ENCODE measurements at regions of chr9 and their contacts with region 1.

Region 1: GRCh38 chr9:131178382-131178781 is 53.0 kb downstream of the NUP214 start:
- DNase-seq: peak; percentile 86
- ATAC-seq: peak; percentile 99
- H3K4me3 Mint-ChIP-seq: no peak overlapping the region
- H3K27ac Mint-ChIP-seq: peak overlapping the region; percentile 48
- H3K4me1 Mint-ChIP-seq: peaks cover 11% of the 10 kb centered on the region
- H3K27me3 Mint-ChIP-seq: no peaks in the 10 kb centered on the region

Region 2: GRCh38 chr9:131068076-131068816 is 110.1 kb before region 1 on chr9:
- CTCF ChIA-PET with region 1: no interaction called
- POLR2A ChIA-PET with region 1: no interaction called
- DNase-seq: no peak
- ATAC-seq: no peak
- H3K4me3 Mint-ChIP-seq: no peak overlapping the region
- H3K27ac Mint-ChIP-seq: no peak overlapping the region
- H3K4me1 Mint-ChIP-seq: no peaks in the 10 kb centered on the region
- H3K27me3 Mint-ChIP-seq: no peaks in the 10 kb centered on the region

Region 3: GRCh38 chr9:131167146-131167692 is 11.2 kb before region 1 on chr9:
- CTCF ChIA-PET with region 1: interaction called, 20 read pairs
- POLR2A ChIA-PET with region 1: interaction called, 6 read pairs
- DNase-seq: no peak
- ATAC-seq: no peak
- H3K4me3 Mint-ChIP-seq: no peak overlapping the region
- H3K27ac Mint-ChIP-seq: no peak overlapping the region
- H3K4me1 Mint-ChIP-seq: peaks cover 6% of the 10 kb centered on the region
- H3K27me3 Mint-ChIP-seq: no peaks in the 10 kb centered on the region

Region 4: DNA sequence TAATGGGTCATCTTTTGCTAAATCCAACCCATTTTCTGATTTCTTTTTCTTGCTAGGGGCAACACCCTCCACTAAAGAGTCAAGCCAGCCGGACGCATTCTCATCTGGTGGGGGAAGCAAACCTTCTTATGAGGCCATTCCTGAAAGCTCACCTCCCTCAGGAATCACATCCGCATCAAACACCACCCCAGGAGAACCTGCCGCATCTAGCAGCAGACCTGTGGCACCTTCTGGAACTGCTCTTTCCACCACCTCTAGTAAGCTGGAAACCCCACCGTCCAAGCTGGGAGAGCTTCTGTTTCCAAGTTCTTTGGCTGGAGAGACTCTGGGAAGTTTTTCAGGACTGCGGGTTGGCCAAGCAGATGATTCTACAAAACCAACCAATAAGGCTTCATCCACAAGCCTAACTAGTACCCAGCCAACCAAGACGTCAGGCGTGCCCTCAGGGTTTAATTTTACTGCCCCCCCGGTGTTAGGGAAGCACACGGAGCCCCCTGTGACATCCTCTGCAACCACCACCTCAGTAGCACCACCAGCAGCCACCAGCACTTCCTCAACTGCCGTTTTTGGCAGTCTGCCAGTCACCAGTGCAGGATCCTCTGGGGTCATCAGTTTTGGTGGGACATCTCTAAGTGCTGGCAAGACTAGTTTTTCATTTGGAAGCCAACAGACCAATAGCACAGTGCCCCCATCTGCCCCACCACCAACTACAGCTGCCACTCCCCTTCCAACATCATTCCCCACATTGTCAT is 19.0 kb after region 1 on chr9:
- CTCF ChIA-PET with region 1: interaction called, 16 read pairs
- POLR2A ChIA-PET with region 1: no interaction called
- DNase-seq: no peak
- ATAC-seq: no peak
- H3K4me3 Mint-ChIP-seq: no peak overlapping the region
- H3K27ac Mint-ChIP-seq: peak overlapping the region; percentile 51
- H3K4me1 Mint-ChIP-seq: peaks cover 16% of the 10 kb centered on the region
- H3K27me3 Mint-ChIP-seq: no peaks in the 10 kb centered on the region

Region 5: GRCh38 chr9:131203431-131204218 is 25.2 kb after region 1 on chr9:
- CTCF ChIA-PET with region 1: interaction called, 16 read pairs
- POLR2A ChIA-PET with region 1: no interaction called
- DNase-seq: no peak
- ATAC-seq: peak; percentile 44
- H3K4me3 Mint-ChIP-seq: no peak overlapping the region
- H3K27ac Mint-ChIP-seq: no peak overlapping the region
- H3K4me1 Mint-ChIP-seq: no peaks in the 10 kb centered on the region
- H3K27me3 Mint-ChIP-seq: no peaks in the 10 kb centered on the region

Region 6: DNA sequence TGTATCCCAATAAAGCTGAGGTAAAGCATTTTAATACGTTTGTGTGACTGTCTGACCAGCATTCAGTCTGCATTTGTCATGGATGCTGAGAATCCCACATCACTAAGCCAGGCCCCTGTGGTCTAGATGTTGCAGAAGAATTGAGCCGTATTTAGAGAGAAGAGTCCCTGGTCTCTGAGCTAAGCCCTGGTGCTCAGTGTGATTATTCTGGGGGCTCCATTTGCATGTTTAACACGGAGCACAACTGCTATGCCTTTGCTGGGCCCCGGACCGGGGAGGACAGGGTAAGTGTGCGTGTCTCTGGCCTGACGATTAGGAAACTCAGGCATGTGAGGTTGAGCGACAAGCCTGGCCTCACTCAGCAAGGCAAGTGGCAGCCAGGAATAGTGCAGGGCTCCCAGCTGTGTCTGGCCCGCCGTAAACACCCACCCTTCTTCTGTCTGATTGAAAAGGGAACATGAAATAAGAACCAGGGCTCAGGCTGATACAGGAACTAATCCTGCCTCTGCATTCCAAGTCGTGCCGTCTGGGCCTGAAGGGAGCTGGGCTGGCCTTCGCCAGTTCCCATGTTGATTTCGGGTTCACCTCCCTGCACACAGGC is 75.6 kb after region 1 on chr9:
- CTCF ChIA-PET with region 1: interaction called, 17 read pairs
- POLR2A ChIA-PET with region 1: interaction called, 3 read pairs
- DNase-seq: no peak
- ATAC-seq: no peak
- H3K4me3 Mint-ChIP-seq: peak overlapping the region; percentile 34
- H3K27ac Mint-ChIP-seq: peak overlapping the region; percentile 97
- H3K4me1 Mint-ChIP-seq: peaks cover 80% of the 10 kb centered on the region
- H3K27me3 Mint-ChIP-seq: no peaks in the 10 kb centered on the region

Region 7: DNA sequence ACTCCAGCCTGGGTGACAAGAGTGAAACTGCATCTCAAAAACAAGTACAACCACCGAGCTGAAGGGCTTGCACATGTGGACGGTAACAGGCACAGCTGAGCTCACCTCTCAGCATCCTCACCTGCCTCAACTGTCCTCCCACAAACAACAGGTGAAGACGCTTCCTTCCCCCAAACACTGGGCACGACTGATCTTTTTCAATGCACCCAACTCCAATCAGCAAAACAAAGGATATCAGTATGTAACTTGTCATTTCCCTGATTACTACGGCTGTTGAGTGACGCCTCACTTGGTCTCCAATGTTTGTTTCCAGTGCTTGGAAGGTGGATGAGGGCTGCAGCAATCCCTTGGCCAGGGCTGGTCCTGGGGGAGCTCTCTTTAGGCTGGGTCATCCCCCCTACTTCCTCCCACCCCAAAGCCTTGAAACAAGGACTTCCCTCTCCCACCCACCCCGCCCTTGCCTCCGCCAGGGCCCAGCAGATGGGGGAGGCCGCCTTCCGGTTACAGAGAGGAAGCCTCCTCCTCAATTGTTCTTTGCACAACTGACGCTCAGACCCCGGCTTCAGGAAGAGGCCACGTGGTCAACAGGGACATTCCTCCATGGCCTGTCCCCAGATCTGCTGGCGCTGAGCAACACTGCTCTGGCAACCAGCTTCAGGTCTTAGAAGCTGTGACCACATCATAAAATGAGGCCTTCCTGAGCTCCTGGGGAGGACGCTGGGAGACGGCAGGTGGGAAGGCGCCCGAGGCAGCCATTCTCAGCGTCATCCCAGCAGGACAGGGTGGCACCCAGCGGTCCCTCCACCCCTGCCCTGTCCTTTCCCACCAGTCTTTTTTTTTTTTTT is 92.0 kb after region 1 on chr9:
- CTCF ChIA-PET with region 1: interaction called, 22 read pairs
- POLR2A ChIA-PET with region 1: interaction called, 4 read pairs
- DNase-seq: peak; percentile 71
- ATAC-seq: peak; percentile 16
- H3K4me3 Mint-ChIP-seq: peak overlapping the region; percentile 99
- H3K27ac Mint-ChIP-seq: peak overlapping the region; percentile 99
- H3K4me1 Mint-ChIP-seq: peaks cover 59% of the 10 kb centered on the region
- H3K27me3 Mint-ChIP-seq: no peaks in the 10 kb centered on the region

Region 8: GRCh38 chr9:131277910-131278701 is 99.7 kb after region 1 on chr9:
- CTCF ChIA-PET with region 1: interaction called, 22 read pairs
- POLR2A ChIA-PET with region 1: interaction called, 3 read pairs
- DNase-seq: peak; percentile 87
- ATAC-seq: peak; percentile 50
- H3K4me3 Mint-ChIP-seq: peak overlapping the region; percentile 84
- H3K27ac Mint-ChIP-seq: peak overlapping the region; percentile 97
- H3K4me1 Mint-ChIP-seq: peaks cover 24% of the 10 kb centered on the region
- H3K27me3 Mint-ChIP-seq: peaks cover 16% of the 10 kb centered on the region